ENCODE measurements at regions of chr19 and their contacts with region 1.

Region 1: GRCh38 chr19:45079063-45079910 is at the start of gene GEMIN7:
- H3K4me3 Mint-ChIP-seq: peak within 1 kb of the TSS; percentile 92
- H3K27ac Mint-ChIP-seq: peak within 1 kb of the TSS; percentile 90
- H3K4me1 Mint-ChIP-seq: peaks cover 58% of the 10 kb centered on the region
- H3K27me3 Mint-ChIP-seq: no peaks in the 10 kb centered on the region

Region 2: GRCh38 chr19:45022010-45022409 is 57.3 kb before region 1 on chr19:
- intact Hi-C with region 1: no loop called
- H3K4me3 Mint-ChIP-seq: no peak overlapping the region
- H3K27ac Mint-ChIP-seq: no peak overlapping the region
- H3K4me1 Mint-ChIP-seq: no peaks in the 10 kb centered on the region
- H3K27me3 Mint-ChIP-seq: no peaks in the 10 kb centered on the region

Region 3: DNA sequence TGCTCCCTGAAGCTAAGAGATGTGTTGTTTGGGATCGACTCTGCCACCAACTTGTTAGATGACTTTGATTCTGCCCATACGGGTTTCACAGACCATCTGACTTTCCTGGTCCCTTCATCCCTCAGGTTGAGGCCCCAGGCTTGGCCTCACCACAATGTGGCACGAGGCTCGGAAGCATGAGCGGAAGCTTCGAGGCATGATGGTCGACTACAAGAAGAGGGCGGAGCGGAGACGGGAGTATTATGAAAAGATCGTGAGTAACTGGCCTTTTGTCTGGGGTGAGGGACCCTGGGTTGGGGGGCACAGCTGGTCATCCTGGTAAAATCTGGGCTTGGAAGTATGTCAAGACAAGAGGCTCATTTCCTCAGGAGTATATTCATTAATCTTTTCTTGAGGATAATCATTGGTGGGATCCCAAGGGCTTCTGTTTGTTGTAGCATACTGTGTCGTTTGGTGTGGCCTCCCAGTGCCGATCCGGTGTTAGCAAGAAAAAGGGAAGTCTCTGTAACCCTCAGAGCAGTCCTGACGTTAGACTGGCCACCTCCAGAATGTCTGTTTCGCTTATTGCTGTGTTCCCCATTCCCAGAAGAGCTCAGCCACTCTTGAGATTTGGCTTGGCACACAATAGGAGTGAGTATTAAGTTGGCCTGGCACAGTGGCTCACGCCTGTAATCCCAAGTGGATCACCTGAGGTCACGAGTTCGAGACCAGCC is 39.1 kb before region 1 on chr19:
- intact Hi-C with region 1: loop called (anchors 5 kb)
- H3K4me3 Mint-ChIP-seq: peak overlapping the region; percentile 81
- H3K27ac Mint-ChIP-seq: peak overlapping the region; percentile 95
- H3K4me1 Mint-ChIP-seq: peaks cover 47% of the 10 kb centered on the region
- H3K27me3 Mint-ChIP-seq: no peaks in the 10 kb centered on the region

Region 4: GRCh38 chr19:45091031-45091923 is 12.0 kb after region 1 on chr19:
- intact Hi-C with region 1: loop called (anchors 1 kb)
- H3K4me3 Mint-ChIP-seq: peak overlapping the region; percentile 95
- H3K27ac Mint-ChIP-seq: peak overlapping the region; percentile 100
- H3K4me1 Mint-ChIP-seq: peaks cover 59% of the 10 kb centered on the region
- H3K27me3 Mint-ChIP-seq: no peaks in the 10 kb centered on the region

Region 5: DNA sequence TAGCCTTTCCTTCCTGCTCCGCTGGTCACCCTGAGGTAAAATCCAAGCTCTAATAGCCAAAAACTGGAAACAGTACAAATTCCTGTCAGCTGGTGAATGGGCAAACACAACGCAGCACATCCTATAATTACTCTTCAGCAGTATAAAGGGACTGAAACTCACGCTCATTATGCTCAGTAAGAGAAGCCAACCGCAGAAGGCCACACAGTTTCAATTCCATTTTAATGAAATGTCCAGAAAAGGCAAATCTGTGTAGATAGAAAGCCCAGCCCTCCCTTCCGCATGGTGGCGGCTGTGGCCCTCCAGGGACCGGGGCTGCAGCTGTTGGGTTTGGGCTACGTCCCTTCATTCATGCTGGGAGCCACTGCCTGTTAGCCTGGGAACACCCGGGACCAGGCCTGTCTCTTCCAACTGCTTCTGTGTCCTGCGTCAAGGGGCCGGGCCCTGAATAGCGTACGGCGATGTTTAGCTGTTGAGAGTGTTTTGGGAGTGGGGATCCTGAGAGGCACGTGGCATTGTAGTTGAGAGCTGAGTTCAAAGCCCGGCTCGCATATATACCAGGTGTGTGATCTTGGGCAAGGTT is 58.0 kb after region 1 on chr19:
- intact Hi-C with region 1: no loop called
- H3K4me3 Mint-ChIP-seq: no peak overlapping the region
- H3K27ac Mint-ChIP-seq: peak overlapping the region; percentile 50
- H3K4me1 Mint-ChIP-seq: peaks cover 39% of the 10 kb centered on the region
- H3K27me3 Mint-ChIP-seq: no peaks in the 10 kb centered on the region

Measured in dendritic cell treated with granulocyte-macrophage colony-stimulating factor and Interleukin-4, amounts not matched to agents 40 ng/mL and 50 ng/mL, for 4 days (primary cell).